ENCODE measurements at regions of chr5 and their contacts with region 1.

Region 1: DNA sequence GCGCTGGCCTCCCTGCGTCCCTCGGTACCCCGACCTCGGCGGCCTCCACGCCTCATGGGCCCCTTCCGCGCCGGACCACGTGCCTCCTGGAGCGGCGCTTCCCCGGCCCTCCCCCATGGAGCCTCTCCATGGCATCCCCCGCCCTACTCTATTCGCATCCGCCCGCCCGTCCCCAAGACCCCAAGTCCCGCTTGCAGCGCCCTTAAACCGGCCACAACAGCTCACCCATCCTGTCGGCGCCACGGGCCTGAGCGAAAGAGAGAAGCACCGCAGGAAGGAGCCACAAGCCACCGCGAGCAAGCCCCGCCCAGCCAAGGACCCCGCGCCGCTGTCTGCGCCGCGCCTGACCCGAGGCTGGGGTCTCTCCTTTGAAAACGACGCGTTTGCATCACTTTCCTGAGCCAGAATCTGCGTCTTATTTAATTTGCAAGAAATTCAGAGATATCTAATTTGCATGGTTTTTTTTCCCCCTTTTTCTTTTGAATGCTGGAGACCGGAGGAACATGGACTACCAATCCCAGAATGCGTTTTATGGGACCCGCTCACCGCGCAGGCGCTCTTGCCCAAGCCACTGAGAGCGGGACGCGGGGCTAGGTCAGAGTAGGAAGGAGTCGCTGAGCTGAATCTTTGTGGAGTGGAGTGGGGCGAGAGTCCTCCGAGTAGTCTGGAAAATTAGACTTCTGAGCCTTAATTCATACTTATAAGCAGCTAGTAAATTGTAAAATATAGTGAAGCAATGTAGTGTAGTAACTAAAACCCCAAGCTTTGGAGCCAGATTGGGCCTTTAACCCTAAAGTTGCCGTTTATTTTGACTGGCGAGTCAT is at the start of gene RPS23:
- DNase-seq: peak; percentile 77 to 93 (median 84)
- ATAC-seq: peak; percentile 92
- H3K4me3 ChIP-seq: peak within 1 kb of the TSS; percentile 78
- H3K4me3 Mint-ChIP-seq: peak within 1 kb of the TSS; percentile 94
- H3K27ac ChIP-seq: peak within 1 kb of the TSS; percentile 62 to 63
- H3K27ac Mint-ChIP-seq: peak within 1 kb of the TSS; percentile 94
- H3K4me1 ChIP-seq: peaks cover 18% of the 10 kb centered on the region
- H3K4me1 Mint-ChIP-seq: peaks cover 29% of the 10 kb centered on the region
- H3K27me3 ChIP-seq: no peaks in the 10 kb centered on the region
- H3K27me3 Mint-ChIP-seq: no peaks in the 10 kb centered on the region
- CTCF ChIP-seq: no peak
- total RNA-seq, gene RPS23: 4,190 to 4,212 TPM

Region 2: GRCh38 chr5:81936066-81936465 is 342.2 kb before region 1 on chr5:
- CTCF ChIA-PET with region 1: no interaction called
- POLR2A ChIA-PET with region 1: no interaction called
- intact Hi-C with region 1: no loop called
- DNase-seq: no peak
- ATAC-seq: no peak
- H3K4me3 ChIP-seq: no peak overlapping the region
- H3K4me3 Mint-ChIP-seq: no peak overlapping the region
- H3K27ac ChIP-seq: no peak overlapping the region
- H3K27ac Mint-ChIP-seq: no peak overlapping the region
- H3K4me1 ChIP-seq: no peaks in the 10 kb centered on the region
- H3K4me1 Mint-ChIP-seq: no peaks in the 10 kb centered on the region
- H3K27me3 ChIP-seq: no peaks in the 10 kb centered on the region
- H3K27me3 Mint-ChIP-seq: no peaks in the 10 kb centered on the region
- CTCF ChIP-seq: no peak

Region 3: DNA sequence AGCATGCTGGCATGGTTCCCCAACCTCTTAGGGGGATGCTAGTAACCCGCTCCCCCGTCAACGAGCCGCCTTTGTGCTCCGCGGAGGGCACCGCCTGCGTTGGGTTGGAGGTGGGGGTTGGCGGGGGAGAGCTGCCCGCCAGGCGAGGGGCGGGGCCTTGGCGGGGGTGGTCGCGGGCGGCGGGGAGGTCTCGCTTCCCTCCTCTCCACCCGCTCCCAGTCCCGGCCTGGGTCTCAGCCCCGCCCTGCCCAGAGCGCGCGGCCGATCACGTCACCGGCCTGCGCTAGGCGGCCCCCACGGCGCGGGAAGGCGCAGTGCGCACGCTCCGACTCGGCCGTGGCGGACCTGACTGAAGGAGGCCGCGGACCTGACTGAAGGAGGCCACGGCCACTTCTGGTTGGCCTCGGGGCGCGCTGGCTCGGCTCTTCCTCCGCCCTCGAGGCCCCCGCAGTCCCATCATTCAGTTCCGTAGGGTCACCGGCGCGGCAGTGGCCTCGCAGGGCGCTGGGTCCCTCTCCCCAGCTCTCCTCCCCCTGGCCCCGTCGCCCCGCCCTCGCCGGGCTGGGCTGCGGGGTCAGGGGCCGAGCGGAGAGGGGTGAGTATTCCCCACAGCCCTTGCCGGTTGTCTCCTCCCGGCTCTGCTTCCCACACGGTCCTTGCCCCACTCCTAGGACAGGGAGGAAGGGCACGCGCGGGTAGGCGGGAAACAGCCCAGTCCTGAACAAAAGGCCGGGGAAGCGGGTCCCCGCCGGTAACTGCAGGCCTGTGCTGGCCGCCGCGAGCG is 306.4 kb before region 1 on chr5 and contains the start of gene ATG10:
- CTCF ChIA-PET with region 1: no interaction called
- POLR2A ChIA-PET with region 1: no interaction called
- intact Hi-C with region 1: loop called in 1 of 2 experiments (anchors 5 kb)
- DNase-seq: peak; percentile 60 to 94 (median 82)
- ATAC-seq: peak; percentile 82
- H3K4me3 ChIP-seq: peak within 1 kb of the TSS; percentile 90
- H3K4me3 Mint-ChIP-seq: peak within 1 kb of the TSS; percentile 98
- H3K27ac ChIP-seq: peak within 1 kb of the TSS; percentile 87 to 98
- H3K27ac Mint-ChIP-seq: peak within 1 kb of the TSS; percentile 96
- H3K4me1 ChIP-seq: peaks cover 5% of the 10 kb centered on the region
- H3K4me1 Mint-ChIP-seq: peaks cover 31% of the 10 kb centered on the region
- H3K27me3 ChIP-seq: no peaks in the 10 kb centered on the region
- H3K27me3 Mint-ChIP-seq: no peaks in the 10 kb centered on the region
- CTCF ChIP-seq: no peak
- total RNA-seq, gene ATG10: 4.7 to 5.3 TPM

Region 4: GRCh38 chr5:82327941-82328340 is 49.6 kb after region 1 on chr5:
- CTCF ChIA-PET with region 1: no interaction called
- POLR2A ChIA-PET with region 1: no interaction called
- intact Hi-C with region 1: no loop called
- DNase-seq: no peak
- ATAC-seq: no peak
- H3K4me3 ChIP-seq: no peak overlapping the region
- H3K4me3 Mint-ChIP-seq: no peak overlapping the region
- H3K27ac ChIP-seq: no peak overlapping the region
- H3K27ac Mint-ChIP-seq: no peak overlapping the region
- H3K4me1 ChIP-seq: no peaks in the 10 kb centered on the region
- H3K4me1 Mint-ChIP-seq: no peaks in the 10 kb centered on the region
- H3K27me3 ChIP-seq: no peaks in the 10 kb centered on the region
- H3K27me3 Mint-ChIP-seq: peaks cover 18% of the 10 kb centered on the region
- CTCF ChIP-seq: no peak

Region 5: GRCh38 chr5:82356808-82357671 is 78.7 kb after region 1 on chr5:
- CTCF ChIA-PET with region 1: no interaction called
- POLR2A ChIA-PET with region 1: interaction called, 3 read pairs
- intact Hi-C with region 1: loop called in 1 of 2 experiments (anchors 2 kb)
- DNase-seq: peak; percentile 60 to 93 (median 73)
- ATAC-seq: peak; percentile 82
- H3K4me3 ChIP-seq: peak overlapping the region; percentile 30
- H3K4me3 Mint-ChIP-seq: peak overlapping the region; percentile 57
- H3K27ac ChIP-seq: peak overlapping the region; percentile 56 to 80
- H3K27ac Mint-ChIP-seq: peak overlapping the region; percentile 88
- H3K4me1 ChIP-seq: peaks cover 24% of the 10 kb centered on the region
- H3K4me1 Mint-ChIP-seq: peaks cover 40% of the 10 kb centered on the region
- H3K27me3 ChIP-seq: no peaks in the 10 kb centered on the region
- H3K27me3 Mint-ChIP-seq: no peaks in the 10 kb centered on the region
- CTCF ChIP-seq: no peak

Region 6: DNA sequence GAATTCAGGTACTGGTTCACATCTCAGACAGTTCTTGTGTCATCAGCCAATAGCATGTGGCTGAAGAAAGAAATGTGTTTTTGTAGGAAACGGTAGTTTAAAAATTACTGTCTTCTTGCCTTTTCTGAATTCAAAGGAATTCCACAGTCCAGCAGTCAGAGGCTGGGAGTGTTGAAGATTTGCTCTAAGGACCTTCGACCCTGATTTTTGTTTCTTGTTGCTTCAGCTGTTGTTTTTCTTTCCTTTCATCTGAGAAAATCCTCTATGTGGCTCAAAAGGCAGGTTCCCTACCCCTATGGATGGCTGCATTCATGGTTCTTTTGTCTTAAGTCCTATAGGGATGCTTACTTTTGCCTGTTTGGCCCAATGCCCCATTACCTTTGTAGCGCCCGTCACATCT is 494.0 kb after region 1 on chr5:
- CTCF ChIA-PET with region 1: no interaction called
- POLR2A ChIA-PET with region 1: no interaction called
- intact Hi-C with region 1: no loop called
- DNase-seq: no peak
- ATAC-seq: no peak
- H3K4me3 ChIP-seq: no peak overlapping the region
- H3K4me3 Mint-ChIP-seq: no peak overlapping the region
- H3K27ac ChIP-seq: no peak overlapping the region
- H3K27ac Mint-ChIP-seq: no peak overlapping the region
- H3K4me1 ChIP-seq: no peaks in the 10 kb centered on the region
- H3K4me1 Mint-ChIP-seq: no peaks in the 10 kb centered on the region
- H3K27me3 ChIP-seq: no peaks in the 10 kb centered on the region
- H3K27me3 Mint-ChIP-seq: no peaks in the 10 kb centered on the region
- CTCF ChIP-seq: no peak